ENCODE measurements at regions of chr12 and their contacts with region 1.

Region 1: DNA sequence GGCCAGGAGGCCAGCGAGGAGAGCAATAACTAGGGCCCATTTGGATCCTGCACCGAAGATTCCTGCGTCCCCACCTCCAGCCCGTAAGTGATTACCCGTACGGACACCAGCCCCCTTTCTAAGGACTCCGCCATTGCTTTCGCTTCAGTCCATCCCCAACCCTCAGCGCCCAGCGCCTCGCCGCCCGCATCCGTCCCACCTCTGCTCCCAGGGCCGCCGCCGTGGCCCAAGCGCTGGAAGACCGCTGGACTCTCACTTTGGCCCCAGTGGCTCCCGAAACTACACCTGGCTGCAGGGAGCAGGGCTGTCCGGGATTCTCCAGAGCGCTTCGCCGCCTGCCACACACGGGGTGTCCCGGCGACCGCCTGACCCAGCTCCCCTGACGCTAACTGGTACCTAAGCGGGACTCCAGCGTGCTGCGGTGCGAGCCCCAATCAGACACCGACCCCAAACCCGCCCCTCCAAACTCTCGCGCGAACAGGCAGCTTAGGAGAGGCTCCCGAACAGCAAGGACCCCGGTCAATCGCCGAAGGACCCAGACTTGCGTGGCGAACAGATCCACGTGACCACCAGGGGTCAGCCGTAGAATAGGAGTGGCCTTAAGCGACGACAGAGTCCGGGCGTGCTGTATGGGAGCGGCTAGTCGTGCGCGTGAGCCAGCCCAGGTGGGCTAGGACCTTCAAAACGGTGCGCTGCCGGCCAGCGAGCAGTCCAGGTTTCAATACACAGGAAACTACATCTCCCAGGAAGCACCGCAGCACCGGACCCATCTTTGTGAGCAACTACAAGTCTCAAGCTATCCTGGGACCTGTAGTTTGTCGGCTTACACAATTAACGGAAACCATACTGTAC is at the start of gene CNPY2:
- H3K4me3 ChIP-seq: peak within 1 kb of the TSS; percentile 91
- H3K27ac ChIP-seq: peak within 1 kb of the TSS; percentile 76
- H3K4me1 ChIP-seq: no peaks in the 10 kb centered on the region; the same call in 1 of the 2 replicates
- CTCF ChIP-seq: peak; percentile 91

Region 2: DNA sequence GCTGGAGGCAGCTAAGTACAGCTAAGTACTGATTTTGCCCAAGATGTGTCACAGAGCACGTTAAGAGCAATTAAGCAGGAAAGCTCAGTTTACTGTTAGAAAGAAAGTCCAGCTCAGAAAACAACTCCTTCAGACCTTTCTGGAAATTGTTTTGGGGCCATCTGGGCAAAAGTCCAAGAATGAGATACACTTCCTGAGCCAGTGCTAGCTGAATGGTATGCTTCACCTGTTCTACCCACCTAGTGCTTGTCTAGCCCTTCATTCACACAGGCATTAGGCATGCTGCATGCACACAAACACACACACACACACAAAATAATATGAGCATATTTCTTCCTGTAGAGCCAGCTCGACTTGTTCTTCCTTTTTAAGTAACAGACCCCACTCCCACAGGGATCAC is 301.6 kb before region 1 on chr12:
- CTCF ChIA-PET with region 1: no interaction called
- POLR2A ChIA-PET with region 1: no interaction called
- H3K4me3 ChIP-seq: no peak overlapping the region
- H3K27ac ChIP-seq: no peak overlapping the region
- H3K4me1 ChIP-seq: no peaks in the 10 kb centered on the region
- CTCF ChIP-seq: no peak

Region 3: DNA sequence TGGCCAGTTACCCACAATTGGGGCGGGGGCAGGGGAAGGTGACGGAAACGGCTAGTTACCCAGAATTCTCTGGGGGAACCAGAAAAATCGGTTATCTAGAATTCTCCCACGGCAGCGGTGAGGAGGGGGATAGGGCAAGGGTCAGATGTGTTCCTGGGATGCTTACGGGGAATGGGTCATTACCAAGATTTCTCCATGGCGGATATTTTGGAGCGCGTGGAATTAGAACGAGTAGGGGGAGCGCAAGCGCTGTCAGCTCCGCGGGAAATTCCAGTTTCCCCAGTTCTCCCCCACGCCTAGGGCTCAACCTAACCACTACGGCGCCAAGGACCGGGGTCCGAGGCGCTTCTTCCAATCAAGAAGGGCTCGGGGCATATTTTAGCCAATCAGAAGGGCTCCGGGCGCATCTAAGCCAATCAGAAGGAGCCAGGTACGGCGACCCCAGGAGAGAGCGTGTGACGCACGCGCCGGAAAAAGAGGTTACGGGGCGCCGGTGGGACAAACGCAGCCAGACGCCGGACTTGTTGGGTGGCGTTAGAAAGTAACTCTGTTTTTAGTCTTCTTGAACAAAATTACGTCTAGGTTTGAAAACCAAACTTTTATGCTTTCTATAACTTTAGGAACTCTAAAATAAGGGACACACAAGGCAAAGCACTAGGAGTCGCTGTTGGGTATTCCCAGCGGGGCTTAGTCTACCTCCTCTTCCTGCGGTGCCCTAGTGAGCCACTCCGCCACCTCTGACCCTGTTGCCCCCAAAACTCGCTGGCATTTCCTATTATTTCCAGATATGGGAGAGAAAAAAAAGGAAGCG is 18.0 kb after region 1 on chr12 and contains the start of gene PAN2:
- CTCF ChIA-PET with region 1: no interaction called
- POLR2A ChIA-PET with region 1: interaction called, 16 read pairs
- H3K4me3 ChIP-seq: peak within 1 kb of the TSS; percentile 63
- H3K27ac ChIP-seq: peak within 1 kb of the TSS; percentile 80
- H3K4me1 ChIP-seq: peaks cover 5% of the 10 kb centered on the region
- CTCF ChIP-seq: peak; percentile 68

Region 4: GRCh38 chr12:56448860-56449621 is 133.2 kb after region 1 on chr12 and contains the start of gene TIMELESS:
- CTCF ChIA-PET with region 1: no interaction called
- POLR2A ChIA-PET with region 1: interaction called, 14 read pairs
- H3K4me3 ChIP-seq: peak within 1 kb of the TSS; percentile 59
- H3K27ac ChIP-seq: peak within 1 kb of the TSS; percentile 93
- H3K4me1 ChIP-seq: peaks cover 5% of the 10 kb centered on the region
- CTCF ChIP-seq: peak; percentile 48; the same call in 1 of the 2 replicates

Region 5: GRCh38 chr12:56488041-56488955 is 172.4 kb after region 1 on chr12 and contains the start of gene GLS2:
- CTCF ChIA-PET with region 1: no interaction called
- POLR2A ChIA-PET with region 1: interaction called, 11 read pairs
- H3K4me3 ChIP-seq: peak within 1 kb of the TSS; percentile 56
- H3K27ac ChIP-seq: peak within 1 kb of the TSS; percentile 60; the same call in 1 of the 2 replicates
- H3K4me1 ChIP-seq: no peaks in the 10 kb centered on the region
- CTCF ChIP-seq: no peak